Activated CD4-positive, alpha-beta T cell treated with anti-CD3 and anti-CD28 coated beads for 36 hours (primary cell): ENCODE measurements at regions of chr10 and their contacts with region 1.

Region 1: GRCh38 chr10:48551861-48552591 is 52.8 kb downstream of the ARHGAP22 start:
- DNase-seq: peak; percentile 51
- ATAC-seq: peak; percentile 58
- H3K4me3 Mint-ChIP-seq: no peak overlapping the region
- H3K27ac Mint-ChIP-seq: no peak overlapping the region
- H3K4me1 Mint-ChIP-seq: no peaks in the 10 kb centered on the region
- H3K27me3 Mint-ChIP-seq: no peaks in the 10 kb centered on the region

Region 2: GRCh38 chr10:49115015-49115795 is 563.2 kb after region 1 on chr10 and contains the start of gene VSTM4:
- CTCF ChIA-PET with region 1: no interaction called
- POLR2A ChIA-PET with region 1: no interaction called
- intact Hi-C with region 1: loop called in 1 of 2 experiments (anchors 10 kb)
- DNase-seq: peak; percentile 33
- ATAC-seq: peak; percentile 51
- H3K4me3 Mint-ChIP-seq: peak within 1 kb of the TSS; percentile 43
- H3K27ac Mint-ChIP-seq: peak within 1 kb of the TSS; percentile 51
- H3K4me1 Mint-ChIP-seq: peaks cover 2% of the 10 kb centered on the region
- H3K27me3 Mint-ChIP-seq: peaks cover 12% of the 10 kb centered on the region
- total RNA-seq, gene VSTM4: 0.07 to 0.11 TPM